Natural killer cell (primary cell): ENCODE measurements at regions of chr1 and their contacts with region 1.

Region 1: GRCh38 chr1:26874896-26875295 is 11.9 kb downstream of the SFN start:
- DNase-seq: no peak
- ATAC-seq: no peak
- H3K4me3 ChIP-seq: no peak overlapping the region
- H3K4me3 Mint-ChIP-seq: no peak overlapping the region
- H3K27ac ChIP-seq: no peak overlapping the region
- H3K27ac Mint-ChIP-seq: peak overlapping the region in 1 of 2 donors; percentile 35
- H3K4me1 ChIP-seq: no peaks in the 10 kb centered on the region
- H3K4me1 Mint-ChIP-seq: no peaks in the 10 kb centered on the region
- H3K27me3 ChIP-seq: no peaks in the 10 kb centered on the region
- H3K27me3 Mint-ChIP-seq: no peaks in the 10 kb centered on the region
- CTCF ChIP-seq: no peak

Region 2: DNA sequence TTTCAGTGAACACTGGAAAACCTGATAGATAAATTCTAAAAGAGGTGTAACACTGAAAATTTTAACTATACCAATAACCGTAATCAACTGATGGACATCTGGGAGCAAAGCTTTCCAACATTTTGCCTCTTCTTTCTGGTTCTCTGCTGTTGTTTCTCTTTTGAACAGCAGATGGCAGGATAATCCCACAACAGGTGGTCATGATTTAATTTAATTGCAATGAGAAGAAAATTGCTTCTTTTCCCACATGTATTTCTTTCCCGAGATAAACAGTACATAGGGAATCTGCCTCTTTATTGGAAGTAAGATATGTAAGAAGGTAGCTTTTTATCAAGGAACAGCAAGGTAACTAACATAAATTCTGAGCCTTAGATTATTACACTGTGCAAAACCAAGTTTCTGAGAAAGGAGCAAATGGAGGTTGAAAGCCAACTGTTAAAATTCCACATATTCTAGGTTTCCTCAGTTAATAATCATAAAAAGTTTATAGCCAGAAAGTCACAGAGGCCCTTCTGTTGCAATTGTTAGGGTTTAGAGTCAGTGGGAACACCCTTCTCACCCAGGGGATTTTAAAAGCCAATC is 272.4 kb before region 1 on chr1:
- intact Hi-C with region 1: loop called (anchors 1 kb)
- DNase-seq: peak in 1 of 2 donors; percentile 86
- ATAC-seq: peak; percentile 49 to 83 (median 69)
- H3K4me3 ChIP-seq: no peak overlapping the region
- H3K4me3 Mint-ChIP-seq: no peak overlapping the region
- H3K27ac ChIP-seq: no peak overlapping the region
- H3K27ac Mint-ChIP-seq: no peak overlapping the region
- H3K4me1 ChIP-seq: no peaks in the 10 kb centered on the region
- H3K4me1 Mint-ChIP-seq: peaks cover 9% of the 10 kb centered on the region in 2 donors
- H3K27me3 ChIP-seq: no peaks in the 10 kb centered on the region
- H3K27me3 Mint-ChIP-seq: peaks cover 0 to 5% of the 10 kb centered on the region in 2 donors
- CTCF ChIP-seq: peak; percentile 98

Region 3: GRCh38 chr1:26811057-26811456 is 63.8 kb before region 1 on chr1:
- intact Hi-C with region 1: loop called (anchors 1 kb)
- DNase-seq: peak in 1 of 2 donors; percentile 64
- ATAC-seq: peak in 2 of 3 donors; percentile 32 to 58
- H3K4me3 ChIP-seq: no peak overlapping the region
- H3K4me3 Mint-ChIP-seq: peak overlapping the region; percentile 71
- H3K27ac ChIP-seq: peak overlapping the region; percentile 54
- H3K27ac Mint-ChIP-seq: peak overlapping the region; percentile 90 to 93
- H3K4me1 ChIP-seq: peaks cover 15% of the 10 kb centered on the region
- H3K4me1 Mint-ChIP-seq: peaks cover 13 to 15% of the 10 kb centered on the region in 2 donors
- H3K27me3 ChIP-seq: no peaks in the 10 kb centered on the region
- H3K27me3 Mint-ChIP-seq: no peaks in the 10 kb centered on the region
- CTCF ChIP-seq: no peak

Region 4: GRCh38 chr1:26833432-26834405 is 41.2 kb before region 1 on chr1:
- intact Hi-C with region 1: no loop called
- DNase-seq: peak; percentile 83 to 98
- ATAC-seq: peak; percentile 93 to 98 (median 96)
- H3K4me3 ChIP-seq: peak overlapping the region; percentile 17
- H3K4me3 Mint-ChIP-seq: peak overlapping the region; percentile 87
- H3K27ac ChIP-seq: peak overlapping the region; percentile 98
- H3K27ac Mint-ChIP-seq: peak overlapping the region; percentile 99 to 100
- H3K4me1 ChIP-seq: peaks cover 70% of the 10 kb centered on the region
- H3K4me1 Mint-ChIP-seq: peaks cover 64 to 68% of the 10 kb centered on the region in 2 donors
- H3K27me3 ChIP-seq: no peaks in the 10 kb centered on the region
- H3K27me3 Mint-ChIP-seq: no peaks in the 10 kb centered on the region
- CTCF ChIP-seq: peak; percentile 25

Region 5: GRCh38 chr1:26853156-26853555 is 21.7 kb before region 1 on chr1:
- intact Hi-C with region 1: loop called (anchors 1 kb)
- DNase-seq: peak; percentile 68 to 87
- ATAC-seq: peak; percentile 69 to 90 (median 76)
- H3K4me3 ChIP-seq: no peak overlapping the region
- H3K4me3 Mint-ChIP-seq: no peak overlapping the region
- H3K27ac ChIP-seq: no peak overlapping the region
- H3K27ac Mint-ChIP-seq: peak overlapping the region; percentile 11 to 26
- H3K4me1 ChIP-seq: no peaks in the 10 kb centered on the region
- H3K4me1 Mint-ChIP-seq: peaks cover 0 to 5% of the 10 kb centered on the region in 2 donors
- H3K27me3 ChIP-seq: no peaks in the 10 kb centered on the region
- H3K27me3 Mint-ChIP-seq: no peaks in the 10 kb centered on the region
- CTCF ChIP-seq: peak; percentile 74

Region 6: GRCh38 chr1:26864610-26865527 is 10.0 kb before region 1 on chr1:
- intact Hi-C with region 1: loop called (anchors 1 kb)
- DNase-seq: peak; percentile 96 to 97
- ATAC-seq: peak; percentile 96 to 99 (median 96)
- H3K4me3 ChIP-seq: peak overlapping the region; percentile 88
- H3K4me3 Mint-ChIP-seq: peak overlapping the region; percentile 94
- H3K27ac ChIP-seq: peak overlapping the region; percentile 75
- H3K27ac Mint-ChIP-seq: peak overlapping the region; percentile 86 to 91
- H3K4me1 ChIP-seq: peaks cover 24% of the 10 kb centered on the region
- H3K4me1 Mint-ChIP-seq: peaks cover 8 to 18% of the 10 kb centered on the region in 2 donors
- H3K27me3 ChIP-seq: no peaks in the 10 kb centered on the region
- H3K27me3 Mint-ChIP-seq: no peaks in the 10 kb centered on the region
- CTCF ChIP-seq: no peak